ENCODE measurements at regions of chr14 and their contacts with region 1.

Region 1: DNA sequence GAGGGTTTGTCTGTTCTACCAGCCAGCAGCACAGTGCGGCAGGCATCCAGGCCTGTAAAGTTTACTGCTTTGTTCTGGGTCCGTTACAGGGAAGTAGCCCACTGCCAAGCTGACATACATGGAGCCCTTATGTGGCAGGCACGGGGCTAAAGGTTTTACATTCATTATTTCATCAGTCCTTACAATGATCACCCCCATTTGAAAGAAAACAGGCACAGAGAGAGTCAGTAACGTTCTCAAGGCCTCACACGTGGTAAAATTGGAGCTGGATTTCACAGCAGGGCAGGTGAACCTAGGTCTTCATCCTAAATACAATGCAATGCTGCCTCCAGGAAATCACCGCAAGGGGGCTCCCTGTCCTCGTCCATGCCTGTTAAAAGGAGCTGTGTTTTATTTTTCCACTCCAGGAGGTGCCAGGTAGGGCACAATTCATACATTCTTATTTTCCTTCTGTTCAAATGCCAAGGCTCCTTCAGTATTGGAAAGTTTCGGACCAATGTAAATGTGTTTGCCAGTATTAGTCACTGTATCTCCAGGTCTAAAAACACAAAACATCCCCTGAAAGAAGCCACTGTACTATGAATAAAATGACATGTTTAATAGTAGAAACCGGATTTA is 172.2 kb upstream of the GZMB start:
- DNase-seq: peak; percentile 88
- H3K4me3 Mint-ChIP-seq: no peak overlapping the region
- H3K27ac Mint-ChIP-seq: peak overlapping the region; percentile 30
- H3K4me1 Mint-ChIP-seq: peaks cover 51% of the 10 kb centered on the region
- H3K27me3 Mint-ChIP-seq: no peaks in the 10 kb centered on the region
- CTCF ChIP-seq: peak; percentile 82

Region 2: GRCh38 chr14:24817212-24818057 is 11.3 kb after region 1 on chr14:
- CTCF ChIA-PET with region 1: interaction called, 6 read pairs
- intact Hi-C with region 1: loop called (anchors 1 kb)
- DNase-seq: peak; percentile 69
- H3K4me3 Mint-ChIP-seq: peak overlapping the region; percentile 34
- H3K27ac Mint-ChIP-seq: peak overlapping the region; percentile 74
- H3K4me1 Mint-ChIP-seq: peaks cover 62% of the 10 kb centered on the region
- H3K27me3 Mint-ChIP-seq: no peaks in the 10 kb centered on the region
- CTCF ChIP-seq: no peak

Region 3: GRCh38 chr14:25034803-25035681 is 228.9 kb after region 1 on chr14:
- CTCF ChIA-PET with region 1: interaction called, 7 read pairs
- intact Hi-C with region 1: loop called (anchors 1 kb)
- DNase-seq: peak; percentile 12
- H3K4me3 Mint-ChIP-seq: no peak overlapping the region
- H3K27ac Mint-ChIP-seq: no peak overlapping the region
- H3K4me1 Mint-ChIP-seq: no peaks in the 10 kb centered on the region
- H3K27me3 Mint-ChIP-seq: no peaks in the 10 kb centered on the region
- CTCF ChIP-seq: no peak

Region 4: GRCh38 chr14:25132732-25133422 is 326.7 kb after region 1 on chr14:
- CTCF ChIA-PET with region 1: interaction called, 24 read pairs
- intact Hi-C with region 1: loop called (anchors 1 kb)
- DNase-seq: peak; percentile 76
- H3K4me3 Mint-ChIP-seq: peak overlapping the region; percentile 61
- H3K27ac Mint-ChIP-seq: peak overlapping the region; percentile 55
- H3K4me1 Mint-ChIP-seq: peaks cover 18% of the 10 kb centered on the region
- H3K27me3 Mint-ChIP-seq: peaks cover 12% of the 10 kb centered on the region
- CTCF ChIP-seq: peak; percentile 65